Ovary (tissue), 10 donors: ENCODE measurements at regions of chr1 and their contacts with region 1.

Region 1: DNA sequence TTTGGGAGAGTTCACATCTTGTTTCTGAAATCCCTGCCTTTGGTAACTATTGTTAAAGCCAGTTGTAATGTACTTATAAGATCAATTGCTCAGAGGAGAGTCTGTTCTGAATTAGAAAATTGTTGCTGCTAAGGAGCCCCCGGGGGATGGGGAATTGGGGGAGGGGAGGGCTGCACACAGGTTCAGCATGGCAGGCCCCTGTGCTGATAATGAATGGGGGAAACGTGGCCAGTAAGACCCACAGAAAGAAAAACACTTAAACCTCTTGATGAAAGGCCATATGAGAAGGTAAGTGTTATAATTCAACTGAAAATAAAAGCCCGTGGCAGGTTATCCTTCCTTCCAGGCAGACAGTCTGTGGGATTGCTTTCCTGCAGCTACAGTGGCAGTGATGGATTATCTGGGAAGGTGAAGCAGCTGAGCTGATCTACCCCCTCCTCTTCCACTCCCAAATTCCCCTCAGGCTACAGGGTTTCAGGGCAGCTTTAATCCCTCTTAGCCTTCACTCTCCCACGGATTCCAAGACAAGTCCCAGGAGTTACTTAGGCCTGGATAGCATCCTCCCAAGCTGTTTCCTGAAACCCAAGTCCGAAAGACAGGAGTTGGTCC is 398.8 kb downstream of the TBX15 start:
- DNase-seq: no peak
- H3K4me3 ChIP-seq: no peak overlapping the region
- H3K27ac ChIP-seq: no peak overlapping the region
- H3K4me1 ChIP-seq: no peaks in the 10 kb centered on the region
- H3K27me3 ChIP-seq: no peaks in the 10 kb centered on the region
- CTCF ChIP-seq: no peak
- EP300 ChIP-seq: no peak
- POLR2A ChIP-seq: no peak

Region 2: GRCh38 chr1:118201524-118201923 is 387.8 kb before region 1 on chr1:
- intact Hi-C with region 1: no loop called
- DNase-seq: no peak
- H3K4me3 ChIP-seq: no peak overlapping the region
- H3K27ac ChIP-seq: no peak overlapping the region
- H3K4me1 ChIP-seq: no peaks in the 10 kb centered on the region
- H3K27me3 ChIP-seq: no peaks in the 10 kb centered on the region
- CTCF ChIP-seq: no peak
- EP300 ChIP-seq: no peak
- POLR2A ChIP-seq: no peak

Region 3: DNA sequence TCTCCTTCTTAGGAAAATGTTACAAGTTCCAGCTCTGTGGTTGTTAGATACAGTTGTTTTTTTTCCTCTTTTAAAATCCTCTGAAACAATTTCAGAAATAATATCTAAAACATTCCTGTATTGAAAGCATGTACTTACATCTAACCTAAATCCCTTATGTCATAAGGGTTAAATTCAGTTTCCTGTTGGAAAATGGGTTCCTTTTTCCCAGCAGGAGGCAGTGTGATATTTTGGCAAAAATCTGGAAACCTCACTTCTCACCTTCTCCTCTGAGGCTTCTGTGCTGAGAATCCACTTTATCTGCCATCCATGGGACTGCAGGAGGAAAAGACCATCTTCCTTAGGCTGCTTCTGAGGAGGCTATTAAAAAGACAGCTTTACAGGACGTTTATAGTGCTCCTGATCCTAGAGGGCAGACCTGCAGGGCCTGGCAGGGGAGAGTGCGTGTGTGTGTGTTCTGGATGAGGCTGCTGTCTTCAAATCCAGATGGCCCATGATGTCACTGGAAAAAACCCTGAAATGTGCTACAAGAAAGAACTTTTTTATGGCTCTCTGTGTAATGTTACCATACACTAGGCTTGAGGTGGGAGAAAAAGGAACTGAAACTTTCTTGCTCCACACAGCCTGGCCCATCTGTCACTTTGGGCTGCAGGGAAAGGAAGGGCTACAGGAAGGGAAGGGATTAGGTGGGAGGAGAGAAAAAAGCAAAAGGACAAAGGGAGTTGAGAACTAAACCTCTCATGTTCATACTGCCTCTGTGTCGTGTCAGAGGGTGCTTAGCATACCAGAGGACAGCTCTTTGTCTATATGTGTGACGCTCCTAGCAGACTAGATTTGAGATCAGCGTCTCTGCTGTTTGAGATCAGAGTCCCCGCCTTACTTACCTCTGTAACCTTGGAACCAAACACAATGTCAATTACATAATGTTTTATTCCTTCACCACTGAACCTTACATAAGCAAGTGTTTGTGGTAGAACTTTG is 25.1 kb before region 1 on chr1:
- intact Hi-C with region 1: loop called in 1 of 4 experiments (anchors 2 kb)
- DNase-seq: no peak
- H3K4me3 ChIP-seq: no peak overlapping the region
- H3K27ac ChIP-seq: no peak overlapping the region
- H3K4me1 ChIP-seq: no peaks in the 10 kb centered on the region
- H3K27me3 ChIP-seq: no peaks in the 10 kb centered on the region
- CTCF ChIP-seq: no peak
- EP300 ChIP-seq: no peak
- POLR2A ChIP-seq: no peak